ENCODE measurements at regions of chr17 and their contacts with region 1.

Region 1: GRCh38 chr17:78360371-78361224 is 721 bp upstream of the SOCS3 start:
- DNase-seq: peak; percentile 59 to 95
- H3K4me3 ChIP-seq: peak overlapping the region; percentile 75
- H3K27ac ChIP-seq: peak overlapping the region; percentile 65
- H3K4me1 ChIP-seq: peaks cover 26% of the 10 kb centered on the region
- H3K27me3 ChIP-seq: no peaks in the 10 kb centered on the region
- CTCF ChIP-seq: peak; percentile 87

Region 2: GRCh38 chr17:78289802-78290363 is 70.7 kb before region 1 on chr17:
- CTCF ChIA-PET with region 1: no interaction called
- POLR2A ChIA-PET with region 1: no interaction called
- intact Hi-C with region 1: loop called (anchors 1 kb)
- DNase-seq: peak; percentile 59 to 68
- H3K4me3 ChIP-seq: no peak overlapping the region
- H3K27ac ChIP-seq: no peak overlapping the region
- H3K4me1 ChIP-seq: peaks cover 9% of the 10 kb centered on the region
- H3K27me3 ChIP-seq: no peaks in the 10 kb centered on the region
- CTCF ChIP-seq: peak; percentile 79

Region 3: DNA sequence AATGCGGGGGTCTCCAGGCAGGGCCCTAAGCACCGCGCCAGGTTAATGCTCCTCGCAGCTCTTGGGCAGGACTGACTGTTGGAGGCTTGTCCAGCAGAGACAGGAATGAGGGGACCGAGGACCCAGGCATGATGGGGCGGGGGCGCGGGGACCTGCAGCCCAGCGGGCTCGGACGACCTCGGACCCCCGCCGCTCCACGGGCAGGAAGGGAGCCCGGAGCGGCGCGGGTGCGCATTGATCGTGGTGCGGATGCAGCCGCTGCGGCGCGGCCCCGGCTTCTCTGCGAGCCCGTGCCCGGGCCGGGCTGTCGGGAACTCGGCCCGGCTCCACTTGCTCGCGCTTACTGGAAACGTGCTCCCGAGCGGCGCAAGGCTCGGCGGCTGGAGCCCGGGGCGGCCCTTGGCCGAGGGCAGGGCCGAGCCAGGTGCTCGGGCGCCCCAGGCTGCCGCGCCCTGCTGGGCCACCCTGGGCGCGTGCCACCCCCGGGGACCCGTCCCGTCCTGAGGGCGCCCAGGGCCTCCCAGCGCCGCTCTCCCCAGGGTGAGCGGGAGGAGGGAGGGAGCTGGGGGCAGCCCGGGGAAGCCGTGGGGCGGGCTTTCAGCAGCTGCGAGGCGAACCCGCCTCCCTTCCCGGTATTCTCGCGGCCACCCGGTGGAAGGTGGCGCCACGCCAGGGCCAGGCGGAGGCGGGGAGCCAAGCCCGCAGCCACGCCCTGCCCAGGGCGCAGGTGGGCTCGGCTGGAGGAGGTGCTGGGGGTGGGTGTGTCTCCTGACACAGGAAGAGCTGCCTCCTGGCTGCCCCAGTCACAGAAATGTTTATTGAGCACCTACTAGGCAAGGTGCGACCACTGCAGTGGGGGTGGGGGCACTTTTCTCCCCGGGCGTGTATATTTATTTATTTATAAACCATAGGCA is 46.6 kb before region 1 on chr17:
- CTCF ChIA-PET with region 1: interaction called, 5 read pairs
- POLR2A ChIA-PET with region 1: interaction called, 7 read pairs
- intact Hi-C with region 1: loop called (anchors 1 kb)
- DNase-seq: peak; percentile 75 to 98
- H3K4me3 ChIP-seq: peak overlapping the region; percentile 51; the same call in 1 of the 2 replicates
- H3K27ac ChIP-seq: peak overlapping the region; percentile 95
- H3K4me1 ChIP-seq: peaks cover 41% of the 10 kb centered on the region
- H3K27me3 ChIP-seq: no peaks in the 10 kb centered on the region
- CTCF ChIP-seq: no peak

Region 4: DNA sequence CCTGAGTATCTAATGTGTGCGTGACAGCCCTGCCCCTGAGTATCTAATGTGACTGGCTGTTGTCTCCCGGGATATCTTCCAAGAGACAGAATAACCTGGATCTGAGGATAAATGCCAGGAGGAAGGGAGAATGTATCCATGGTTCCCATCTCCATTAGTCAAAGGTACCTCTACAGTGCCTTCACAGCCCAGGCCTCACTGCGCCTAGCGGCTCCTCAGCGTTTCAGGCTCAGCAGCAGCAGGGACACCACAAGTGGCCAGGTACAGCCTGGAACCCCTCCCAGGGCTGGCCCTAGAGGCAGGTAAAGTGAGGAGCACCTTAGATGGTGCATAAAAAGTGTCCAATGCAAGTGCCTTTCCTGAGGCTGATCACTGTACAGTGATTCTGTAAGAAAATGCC is 32.7 kb before region 1 on chr17:
- CTCF ChIA-PET with region 1: no interaction called
- POLR2A ChIA-PET with region 1: no interaction called
- intact Hi-C with region 1: no loop called
- DNase-seq: no peak
- H3K4me3 ChIP-seq: no peak overlapping the region
- H3K27ac ChIP-seq: peak overlapping the region; percentile 96
- H3K4me1 ChIP-seq: peaks cover 49% of the 10 kb centered on the region
- H3K27me3 ChIP-seq: no peaks in the 10 kb centered on the region
- CTCF ChIP-seq: no peak

Region 5: GRCh38 chr17:78343187-78343542 is 17.4 kb before region 1 on chr17:
- CTCF ChIA-PET with region 1: no interaction called
- POLR2A ChIA-PET with region 1: interaction called, 3 read pairs
- intact Hi-C with region 1: loop called (anchors 1 kb)
- DNase-seq: peak in 1 of 2 experiments; percentile 62
- H3K4me3 ChIP-seq: peak overlapping the region; percentile 60; the same call in 1 of the 2 replicates
- H3K27ac ChIP-seq: peak overlapping the region; percentile 92
- H3K4me1 ChIP-seq: peaks cover 68% of the 10 kb centered on the region
- H3K27me3 ChIP-seq: no peaks in the 10 kb centered on the region
- CTCF ChIP-seq: no peak

Region 6: GRCh38 chr17:78484300-78485246 is 124.0 kb after region 1 on chr17:
- CTCF ChIA-PET with region 1: no interaction called
- POLR2A ChIA-PET with region 1: interaction called, 14 read pairs
- intact Hi-C with region 1: loop called (anchors 10 kb)
- DNase-seq: peak in 1 of 2 experiments; percentile 71
- H3K4me3 ChIP-seq: peak overlapping the region; percentile 58
- H3K27ac ChIP-seq: no peak overlapping the region
- H3K4me1 ChIP-seq: no peaks in the 10 kb centered on the region
- H3K27me3 ChIP-seq: no peaks in the 10 kb centered on the region
- CTCF ChIP-seq: no peak

Measured in PC-9 (cell line).